AG04449 (cell line): ENCODE measurements at regions of chr2 and their contacts with region 1.

Region 1: GRCh38 chr2:71995067-71995665 is 152.5 kb downstream of the CYP26B1 start:
- DNase-seq: no peak
- H3K4me3 ChIP-seq: no peak overlapping the region
- CTCF ChIP-seq: peak; percentile 29

Region 2: DNA sequence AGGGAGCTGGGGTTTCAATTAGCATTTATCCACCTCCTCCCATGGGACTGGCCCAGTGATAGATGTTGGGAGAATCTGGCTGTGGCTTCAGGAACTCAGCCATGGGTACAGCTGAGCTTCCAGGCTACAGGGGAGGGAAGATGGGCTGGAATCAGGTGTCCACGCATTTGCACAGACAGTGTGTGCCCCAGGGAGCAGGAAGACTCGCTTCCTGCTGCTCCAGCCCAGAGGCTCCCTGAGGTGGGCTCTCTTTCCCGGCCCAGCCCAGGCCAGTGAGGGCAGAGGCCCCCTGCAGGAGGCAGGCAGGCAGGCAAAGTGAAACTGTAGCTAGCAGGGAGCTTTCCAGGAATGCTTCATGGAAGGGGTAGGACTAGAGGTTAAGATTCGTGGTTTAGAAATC is 513.1 kb before region 1 on chr2:
- CTCF ChIA-PET with region 1: no interaction called
- POLR2A ChIA-PET with region 1: no interaction called
- DNase-seq: no peak
- H3K4me3 ChIP-seq: no peak overlapping the region
- CTCF ChIP-seq: peak; percentile 31

Region 3: GRCh38 chr2:71816815-71817214 is 178.4 kb before region 1 on chr2:
- CTCF ChIA-PET with region 1: no interaction called
- POLR2A ChIA-PET with region 1: no interaction called
- DNase-seq: no peak
- H3K4me3 ChIP-seq: no peak overlapping the region
- CTCF ChIP-seq: no peak

Region 4: DNA sequence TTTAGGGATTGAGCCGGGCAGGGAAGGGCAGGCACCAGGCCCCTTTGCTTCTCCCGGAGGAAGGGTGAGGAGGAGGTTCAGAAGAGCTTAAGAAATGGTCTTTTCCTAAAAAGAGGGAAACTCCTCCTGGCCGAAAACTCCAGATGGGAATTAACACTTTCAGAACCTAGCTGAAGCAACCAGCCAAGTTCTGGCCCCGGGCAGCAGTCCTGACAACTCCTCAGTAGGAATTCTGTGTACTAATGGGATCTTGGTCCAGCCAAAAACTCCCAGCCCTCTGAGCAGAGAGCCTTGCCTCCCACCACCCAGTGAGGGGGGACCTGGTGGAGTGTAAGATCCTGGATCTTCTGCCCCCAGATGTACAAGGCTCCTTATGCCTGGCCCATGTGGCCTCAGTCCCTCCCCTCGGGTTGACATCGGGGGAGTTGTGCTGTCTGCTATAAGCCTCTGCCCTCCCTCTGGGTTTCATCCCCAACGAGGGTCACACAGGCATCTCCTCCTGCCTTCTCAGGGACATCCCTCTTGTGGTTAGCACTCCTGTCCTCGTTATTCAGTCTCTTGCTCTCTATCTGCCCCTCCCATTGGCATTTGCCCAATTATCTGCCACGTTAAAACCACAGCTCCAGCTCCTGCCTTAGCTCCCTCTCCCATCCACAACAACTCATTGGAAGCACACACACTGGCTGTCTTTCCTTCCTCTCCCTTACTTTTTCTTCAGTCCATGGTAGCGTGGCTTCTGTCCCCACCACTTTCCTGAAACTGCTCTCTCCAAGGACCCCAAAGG is 32.1 kb before region 1 on chr2:
- CTCF ChIA-PET with region 1: interaction called, 10 read pairs
- POLR2A ChIA-PET with region 1: no interaction called
- DNase-seq: no peak
- H3K4me3 ChIP-seq: no peak overlapping the region
- CTCF ChIP-seq: no peak

Region 5: DNA sequence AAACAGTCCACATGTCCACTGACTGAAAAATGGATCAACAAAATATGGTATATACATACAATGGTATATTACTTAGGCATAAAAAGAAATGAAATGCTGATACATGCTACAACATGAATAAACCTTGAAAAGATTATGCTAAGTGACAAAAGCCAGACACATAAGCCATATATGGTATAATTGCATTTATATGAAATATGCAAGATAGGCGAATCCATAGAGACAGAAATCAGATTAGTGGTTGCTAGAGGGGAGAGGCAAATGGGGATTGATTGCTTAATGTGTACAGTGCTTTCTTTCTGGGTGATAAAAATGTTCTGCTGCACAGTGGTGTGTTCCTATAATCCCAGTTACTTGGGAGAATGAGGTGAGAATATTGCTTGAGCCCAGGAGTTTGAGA is 18.5 kb before region 1 on chr2:
- CTCF ChIA-PET with region 1: interaction called, 12 read pairs
- POLR2A ChIA-PET with region 1: no interaction called
- DNase-seq: no peak
- H3K4me3 ChIP-seq: no peak overlapping the region
- CTCF ChIP-seq: no peak

Region 6: DNA sequence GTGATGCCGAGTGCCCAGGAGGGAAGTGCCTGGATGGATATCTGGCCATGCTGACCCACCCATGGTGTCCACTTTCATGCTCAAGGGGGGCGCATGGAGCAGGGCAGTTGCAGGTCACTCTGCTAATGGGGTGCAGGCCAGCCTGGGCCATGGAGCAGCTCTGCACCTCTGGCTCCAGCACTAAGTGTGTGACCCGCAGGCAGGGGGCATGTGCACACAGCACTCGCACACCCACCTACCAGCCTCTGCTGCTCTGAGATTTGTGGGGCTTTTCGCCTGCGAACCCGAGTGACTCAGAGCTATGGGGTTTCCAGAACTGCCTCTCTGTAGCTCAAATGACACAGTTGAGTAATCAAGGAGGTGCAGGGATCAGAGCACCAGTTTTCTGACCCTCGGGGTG is 86.3 kb after region 1 on chr2:
- CTCF ChIA-PET with region 1: no interaction called
- POLR2A ChIA-PET with region 1: no interaction called
- DNase-seq: no peak
- H3K4me3 ChIP-seq: no peak overlapping the region
- CTCF ChIP-seq: no peak